Naive thymus-derived CD4-positive, alpha-beta T cell (primary cell): ENCODE measurements at regions of chr2 and their contacts with region 1.

Region 1: DNA sequence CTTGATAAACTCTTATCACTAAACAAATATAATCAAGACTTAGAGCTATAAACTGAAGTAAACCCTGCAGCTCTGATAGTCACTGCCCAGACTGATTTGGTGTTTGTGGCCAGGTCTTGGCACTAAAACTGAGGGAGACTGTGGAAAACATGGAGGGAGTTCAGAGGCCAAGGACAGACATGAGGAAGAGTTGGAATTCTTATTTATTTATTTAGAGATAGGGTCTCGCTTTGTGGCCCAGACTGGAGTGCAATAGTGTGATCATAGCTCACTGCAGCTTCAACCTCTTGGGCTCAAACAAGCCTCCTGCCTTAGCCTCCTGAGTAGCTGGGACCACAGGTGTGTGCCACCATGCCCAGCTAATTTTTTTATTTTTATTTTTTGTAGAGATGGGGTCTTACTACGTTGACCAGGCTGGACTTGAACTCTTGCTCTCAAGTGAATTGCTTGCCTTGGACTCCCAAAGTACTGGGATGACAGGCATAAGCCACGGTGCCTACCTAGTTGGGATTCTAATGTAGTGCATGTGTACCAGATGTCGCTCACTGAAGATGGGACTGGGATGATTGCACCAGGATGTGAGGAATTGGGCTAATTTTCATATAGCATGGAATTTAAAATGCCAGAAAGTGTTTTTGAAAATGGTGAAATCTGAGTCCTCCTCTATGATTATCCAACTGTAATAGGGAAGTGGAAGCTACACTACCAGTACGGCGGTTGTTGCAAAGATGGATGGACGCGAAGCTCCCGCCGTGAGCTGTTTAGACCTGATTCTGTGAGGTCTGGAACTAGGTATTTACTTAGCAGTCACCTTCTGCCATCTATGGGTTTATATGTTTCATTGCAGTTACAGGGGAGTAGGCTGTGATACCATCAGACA is 52.7 kb upstream of the CTLA4 start:
- DNase-seq: peak in 7 of 9 donors; percentile 59 to 80 (median 68)
- ATAC-seq: peak; percentile 87
- H3K4me3 ChIP-seq: peak overlapping the region; percentile 24
- H3K4me3 Mint-ChIP-seq: peak overlapping the region; percentile 55 to 90 (median 80)
- H3K27ac ChIP-seq: no peak overlapping the region
- H3K27ac Mint-ChIP-seq: peak overlapping the region; percentile 16 to 92 (median 74)
- H3K4me1 ChIP-seq: peaks cover 23 to 30% of the 10 kb centered on the region in 2 donors
- H3K4me1 Mint-ChIP-seq: peaks cover 27 to 55% (median 52%) of the 10 kb centered on the region in 7 donors
- H3K27me3 ChIP-seq: no peaks in the 10 kb centered on the region
- H3K27me3 Mint-ChIP-seq: peaks cover 0 to 6% (median 0%) of the 10 kb centered on the region in 5 donors

Region 2: GRCh38 chr2:202193881-202194353 is 1621.0 kb before region 1 on chr2:
- CTCF ChIA-PET with region 1: no interaction called
- POLR2A ChIA-PET with region 1: no interaction called
- intact Hi-C with region 1: no loop called
- DNase-seq: no peak
- ATAC-seq: no peak
- H3K4me3 ChIP-seq: no peak overlapping the region
- H3K4me3 Mint-ChIP-seq: no peak overlapping the region
- H3K27ac ChIP-seq: no peak overlapping the region
- H3K27ac Mint-ChIP-seq: no peak overlapping the region
- H3K4me1 ChIP-seq: no peaks in the 10 kb centered on the region
- H3K4me1 Mint-ChIP-seq: no peaks in the 10 kb centered on the region
- H3K27me3 ChIP-seq: no peaks in the 10 kb centered on the region
- H3K27me3 Mint-ChIP-seq: peaks cover 4 to 23% (median 6%) of the 10 kb centered on the region in 5 donors

Region 3: GRCh38 chr2:202588647-202589581 is 1226.0 kb before region 1 on chr2:
- CTCF ChIA-PET with region 1: no interaction called
- POLR2A ChIA-PET with region 1: no interaction called
- intact Hi-C with region 1: loop called in 1 of 2 experiments (anchors 1 kb)
- DNase-seq: peak; percentile 32 to 82 (median 77)
- ATAC-seq: peak; percentile 96
- H3K4me3 ChIP-seq: no peak overlapping the region
- H3K4me3 Mint-ChIP-seq: peak overlapping the region in 9 of 10 donors; percentile 3 to 76 (median 42)
- H3K27ac ChIP-seq: no peak overlapping the region
- H3K27ac Mint-ChIP-seq: peak overlapping the region in 5 of 9 donors; percentile 7 to 78 (median 64)
- H3K4me1 ChIP-seq: peaks cover 0 to 4% of the 10 kb centered on the region in 2 donors
- H3K4me1 Mint-ChIP-seq: peaks cover 5 to 15% (median 11%) of the 10 kb centered on the region in 7 donors
- H3K27me3 ChIP-seq: no peaks in the 10 kb centered on the region
- H3K27me3 Mint-ChIP-seq: no peaks in the 10 kb centered on the region

Region 4: DNA sequence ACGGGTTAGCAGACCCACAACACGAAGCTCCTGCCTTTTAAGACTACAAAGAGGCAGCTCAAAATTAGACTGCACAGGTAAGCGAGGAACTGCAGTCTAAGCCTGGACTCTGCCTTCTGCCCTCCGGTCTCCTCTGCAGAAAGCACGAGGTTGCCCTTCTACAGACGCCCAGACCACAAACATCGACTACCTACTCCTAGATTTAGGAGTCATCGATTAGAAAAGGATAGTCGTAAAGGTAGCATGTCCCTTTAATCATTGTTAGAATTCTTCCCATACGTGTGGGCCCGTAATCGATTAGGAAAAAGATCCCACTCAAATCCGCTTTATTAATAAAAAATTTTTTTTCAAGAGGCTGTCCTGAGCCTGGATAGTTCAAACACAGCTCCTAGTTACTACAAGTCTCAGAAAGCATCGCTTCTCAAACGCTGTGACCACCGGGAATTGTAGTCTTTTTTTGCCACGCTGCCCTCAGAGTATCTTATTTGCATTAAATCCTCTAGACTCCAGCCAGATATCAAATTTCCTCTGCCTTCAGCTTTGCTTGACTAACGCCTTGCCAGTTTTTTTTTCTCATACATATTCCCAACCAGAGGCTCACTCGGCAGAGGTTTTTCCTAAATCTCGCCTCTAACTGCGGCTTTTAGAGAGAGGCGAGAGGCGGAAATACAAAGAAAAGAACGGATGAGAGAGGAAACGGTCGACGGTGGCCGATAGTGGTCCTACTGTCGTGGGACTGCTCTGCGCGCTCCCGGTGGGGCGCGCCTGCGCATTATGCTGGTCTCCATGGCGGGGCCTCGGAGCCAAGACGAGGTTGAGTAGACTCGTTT is 903.2 kb before region 1 on chr2 and contains the starts of genes CARF and WDR12:
- CTCF ChIA-PET with region 1: interaction called, 3 read pairs
- POLR2A ChIA-PET with region 1: no interaction called
- intact Hi-C with region 1: loop called in 1 of 2 experiments (anchors 5 kb)
- DNase-seq: peak; percentile 81 to 93 (median 89)
- ATAC-seq: peak; percentile 93
- H3K4me3 ChIP-seq: peak within 1 kb of the TSS; percentile 82
- H3K4me3 Mint-ChIP-seq: peak within 1 kb of the TSS; percentile 90 to 100 (median 98)
- H3K27ac ChIP-seq: peak within 1 kb of the TSS; percentile 79
- H3K27ac Mint-ChIP-seq: peak within 1 kb of the TSS; percentile 93 to 99 (median 97)
- H3K4me1 ChIP-seq: peaks cover 4 to 11% of the 10 kb centered on the region in 2 donors
- H3K4me1 Mint-ChIP-seq: peaks cover 24 to 50% (median 34%) of the 10 kb centered on the region in 7 donors
- H3K27me3 ChIP-seq: no peaks in the 10 kb centered on the region
- H3K27me3 Mint-ChIP-seq: no peaks in the 10 kb centered on the region
- total RNA-seq, gene CARF: 10.2 to 31.2 (median 15.4) TPM
- total RNA-seq, gene WDR12: 17.2 to 50.4 (median 20.8) TPM

Region 5: DNA sequence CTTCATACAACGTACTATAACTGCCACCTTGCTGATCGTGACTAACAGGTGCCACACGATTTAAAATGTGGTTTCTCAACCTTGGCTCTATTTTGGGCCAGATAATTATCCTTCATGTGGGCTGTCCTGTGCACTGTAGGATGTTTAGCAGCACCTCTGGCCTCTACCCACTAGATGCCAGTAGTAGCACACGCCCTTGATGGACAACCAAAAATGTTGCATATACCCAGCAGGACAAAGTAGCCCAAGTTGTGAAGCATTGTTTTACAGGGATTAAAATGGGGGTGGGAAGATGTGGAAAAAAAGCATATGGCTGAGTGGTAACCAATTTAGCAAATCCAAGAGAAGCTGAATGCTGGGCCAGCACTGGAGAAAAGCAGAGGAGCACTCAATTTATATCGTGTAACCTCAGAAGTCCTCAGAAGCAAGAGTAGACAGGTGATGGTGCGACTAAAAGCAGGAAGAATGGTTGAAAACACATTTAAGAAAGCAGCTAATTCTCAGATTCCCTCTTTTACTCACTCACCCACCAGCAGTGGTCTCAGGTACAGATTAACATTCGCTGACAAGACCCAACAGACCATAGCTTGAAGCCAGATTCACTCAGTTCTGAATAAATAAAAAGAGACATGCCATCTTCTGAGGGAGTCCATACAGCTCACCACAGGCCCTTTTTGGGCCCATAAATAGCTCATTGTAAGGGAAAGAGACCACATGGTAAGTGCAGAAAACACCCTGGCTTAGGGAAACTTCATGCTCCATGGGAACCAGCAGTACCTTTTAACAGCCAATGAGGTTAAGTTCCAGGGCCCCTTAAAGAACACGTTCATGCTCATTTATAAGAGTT is 330.4 kb before region 1 on chr2:
- CTCF ChIA-PET with region 1: interaction called, 136 read pairs
- POLR2A ChIA-PET with region 1: interaction called, 6 read pairs
- intact Hi-C with region 1: loop called (anchors 1 kb)
- DNase-seq: peak in 8 of 9 donors; percentile 20 to 69 (median 60)
- ATAC-seq: peak; percentile 92
- H3K4me3 ChIP-seq: no peak overlapping the region
- H3K4me3 Mint-ChIP-seq: peak overlapping the region in 5 of 10 donors; percentile 2 to 38 (median 14)
- H3K27ac ChIP-seq: no peak overlapping the region
- H3K27ac Mint-ChIP-seq: peak overlapping the region in 7 of 9 donors; percentile 3 to 88 (median 24)
- H3K4me1 ChIP-seq: peaks cover 0 to 7% of the 10 kb centered on the region in 2 donors
- H3K4me1 Mint-ChIP-seq: peaks cover 2 to 9% (median 7%) of the 10 kb centered on the region in 7 donors
- H3K27me3 ChIP-seq: no peaks in the 10 kb centered on the region
- H3K27me3 Mint-ChIP-seq: no peaks in the 10 kb centered on the region

Region 6: DNA sequence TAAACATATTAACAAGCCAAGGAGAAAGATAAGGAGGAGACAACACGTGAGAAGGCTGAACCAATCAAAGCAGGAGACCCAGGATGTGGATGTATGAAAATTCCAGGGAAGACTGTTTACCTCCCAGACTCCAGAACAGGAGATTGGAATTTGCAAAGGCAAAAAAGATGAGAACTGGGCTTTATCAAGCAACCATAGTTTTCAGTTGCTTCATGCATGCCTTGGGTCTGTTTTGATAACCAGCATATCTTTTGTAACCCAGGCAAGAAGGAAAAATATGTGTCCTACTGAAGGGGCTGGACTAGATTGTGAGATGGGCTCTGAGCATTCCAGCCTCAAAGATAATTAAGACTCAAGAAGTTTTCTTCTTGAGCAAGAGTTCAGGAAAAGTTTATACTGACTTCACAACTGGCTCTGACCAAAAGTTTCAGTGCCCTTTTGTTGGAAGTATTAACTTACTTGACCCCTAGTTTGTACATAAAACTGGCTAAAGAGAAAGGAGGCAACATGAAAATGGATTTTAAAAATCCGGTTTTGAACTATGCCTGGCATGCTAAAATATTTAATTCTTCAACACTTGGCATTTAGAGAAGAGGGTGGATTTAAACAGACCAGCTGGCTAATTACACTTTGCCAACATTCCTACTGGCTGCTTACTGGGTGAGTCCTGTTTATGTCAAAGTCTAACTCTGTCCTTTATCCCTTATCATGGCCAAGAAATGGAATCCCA is 187.8 kb before region 1 on chr2:
- CTCF ChIA-PET with region 1: no interaction called
- POLR2A ChIA-PET with region 1: no interaction called
- intact Hi-C with region 1: no loop called
- DNase-seq: no peak
- ATAC-seq: no peak
- H3K4me3 ChIP-seq: no peak overlapping the region
- H3K4me3 Mint-ChIP-seq: no peak overlapping the region
- H3K27ac ChIP-seq: no peak overlapping the region
- H3K27ac Mint-ChIP-seq: no peak overlapping the region
- H3K4me1 ChIP-seq: peaks cover 0 to 5% of the 10 kb centered on the region in 2 donors
- H3K4me1 Mint-ChIP-seq: peaks cover 4 to 20% (median 7%) of the 10 kb centered on the region in 7 donors
- H3K27me3 ChIP-seq: no peaks in the 10 kb centered on the region
- H3K27me3 Mint-ChIP-seq: peaks cover 0 to 7% (median 0%) of the 10 kb centered on the region in 5 donors

Region 7: DNA sequence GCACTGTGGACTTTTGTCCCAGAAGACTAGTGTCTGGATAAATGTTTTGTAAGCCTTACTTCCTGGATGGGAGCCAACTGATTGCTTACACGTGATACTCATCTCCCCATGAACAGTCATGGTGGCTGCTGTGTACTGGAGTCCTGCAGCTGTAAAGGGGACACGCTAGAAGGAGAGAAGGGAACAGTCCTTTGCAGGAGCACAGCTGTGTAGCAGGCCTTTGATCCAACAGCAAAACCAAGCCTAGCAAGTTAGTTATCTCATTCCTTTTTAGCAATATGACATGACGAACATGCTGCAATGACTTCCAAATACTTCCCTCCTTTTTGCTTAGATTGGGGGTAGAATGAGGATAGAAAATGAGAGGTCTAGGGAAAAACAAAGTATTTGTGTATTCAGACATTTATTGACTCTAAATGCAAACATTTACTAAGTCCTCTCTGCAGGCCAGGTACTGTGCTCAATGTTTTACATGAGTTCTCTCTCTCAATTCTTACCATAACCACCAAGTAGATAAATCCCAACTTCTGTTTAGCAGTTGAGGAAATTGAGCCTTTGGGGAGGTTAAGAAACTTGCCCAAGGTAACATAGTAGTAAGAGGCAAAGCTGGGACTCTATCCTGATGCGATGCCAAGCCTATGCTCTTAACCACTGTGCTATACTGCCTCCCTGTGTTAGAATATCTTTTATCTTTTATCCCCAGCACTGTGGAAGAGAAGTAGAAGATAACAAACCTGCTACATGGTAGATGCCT is 163.9 kb before region 1 on chr2:
- CTCF ChIA-PET with region 1: no interaction called
- POLR2A ChIA-PET with region 1: no interaction called
- intact Hi-C with region 1: loop called (anchors 1 kb)
- DNase-seq: peak in 4 of 9 donors; percentile 8 to 24 (median 12)
- ATAC-seq: peak; percentile 64
- H3K4me3 ChIP-seq: no peak overlapping the region
- H3K4me3 Mint-ChIP-seq: no peak overlapping the region
- H3K27ac ChIP-seq: no peak overlapping the region
- H3K27ac Mint-ChIP-seq: peak overlapping the region in 4 of 9 donors; percentile 5 to 48 (median 34)
- H3K4me1 ChIP-seq: no peaks in the 10 kb centered on the region
- H3K4me1 Mint-ChIP-seq: peaks cover 20 to 40% (median 29%) of the 10 kb centered on the region in 7 donors
- H3K27me3 ChIP-seq: no peaks in the 10 kb centered on the region
- H3K27me3 Mint-ChIP-seq: no peaks in the 10 kb centered on the region

Region 8: GRCh38 chr2:203782262-203782976 is 32.5 kb before region 1 on chr2:
- CTCF ChIA-PET with region 1: interaction called, 34 read pairs
- POLR2A ChIA-PET with region 1: interaction called, 3 read pairs
- intact Hi-C with region 1: loop called in 1 of 2 experiments (anchors 1 kb)
- DNase-seq: peak in 8 of 9 donors; percentile 46 to 73 (median 64)
- ATAC-seq: peak; percentile 92
- H3K4me3 ChIP-seq: no peak overlapping the region
- H3K4me3 Mint-ChIP-seq: peak overlapping the region in 6 of 10 donors; percentile 39 to 63 (median 46)
- H3K27ac ChIP-seq: no peak overlapping the region
- H3K27ac Mint-ChIP-seq: peak overlapping the region; percentile 63 to 85 (median 81)
- H3K4me1 ChIP-seq: peaks cover 17 to 26% of the 10 kb centered on the region in 2 donors
- H3K4me1 Mint-ChIP-seq: peaks cover 11 to 64% (median 53%) of the 10 kb centered on the region in 7 donors
- H3K27me3 ChIP-seq: no peaks in the 10 kb centered on the region
- H3K27me3 Mint-ChIP-seq: no peaks in the 10 kb centered on the region

Region 9: GRCh38 chr2:203846490-203847105 is 31.7 kb after region 1 on chr2:
- CTCF ChIA-PET with region 1: no interaction called
- POLR2A ChIA-PET with region 1: no interaction called
- intact Hi-C with region 1: no loop called
- DNase-seq: no peak
- ATAC-seq: no peak
- H3K4me3 ChIP-seq: no peak overlapping the region
- H3K4me3 Mint-ChIP-seq: no peak overlapping the region
- H3K27ac ChIP-seq: no peak overlapping the region
- H3K27ac Mint-ChIP-seq: peak overlapping the region in 1 of 9 donors; percentile 70
- H3K4me1 ChIP-seq: no peaks in the 10 kb centered on the region
- H3K4me1 Mint-ChIP-seq: peaks cover 0 to 15% (median 0%) of the 10 kb centered on the region in 7 donors
- H3K27me3 ChIP-seq: no peaks in the 10 kb centered on the region
- H3K27me3 Mint-ChIP-seq: no peaks in the 10 kb centered on the region

Region 10: GRCh38 chr2:203909261-203909967 is 94.5 kb after region 1 on chr2:
- CTCF ChIA-PET with region 1: interaction called, 58 read pairs
- POLR2A ChIA-PET with region 1: interaction called, 5 read pairs
- intact Hi-C with region 1: loop called (anchors 1 kb)
- DNase-seq: peak in 6 of 9 donors; percentile 42 to 61 (median 53)
- ATAC-seq: peak; percentile 82
- H3K4me3 ChIP-seq: no peak overlapping the region
- H3K4me3 Mint-ChIP-seq: peak overlapping the region in 8 of 10 donors; percentile 26 to 81 (median 64)
- H3K27ac ChIP-seq: no peak overlapping the region
- H3K27ac Mint-ChIP-seq: peak overlapping the region in 6 of 9 donors; percentile 8 to 71 (median 42)
- H3K4me1 ChIP-seq: peaks cover 0 to 7% of the 10 kb centered on the region in 2 donors
- H3K4me1 Mint-ChIP-seq: peaks cover 4 to 25% (median 8%) of the 10 kb centered on the region in 7 donors
- H3K27me3 ChIP-seq: no peaks in the 10 kb centered on the region
- H3K27me3 Mint-ChIP-seq: peaks cover 0 to 10% (median 0%) of the 10 kb centered on the region in 5 donors